Mammary epithelial cell (primary cell): ENCODE measurements at regions of chr14 and their contacts with region 1.

Region 1: GRCh38 chr14:90642244-90642717 is 173.9 kb downstream of the TTC7B start:
- DNase-seq: no peak
- H3K4me3 ChIP-seq: no peak overlapping the region
- H3K27ac ChIP-seq: no peak overlapping the region
- H3K4me1 ChIP-seq: peaks cover 24% of the 10 kb centered on the region
- H3K27me3 ChIP-seq: no peaks in the 10 kb centered on the region
- CTCF ChIP-seq: no peak

Region 2: GRCh38 chr14:90611936-90612335 is 30.3 kb before region 1 on chr14:
- CTCF ChIA-PET with region 1: no interaction called
- dilution Hi-C with region 1: no loop called
- in situ Hi-C with region 1: no loop called
- intact Hi-C with region 1: loop called (anchors 2 kb)
- DNase-seq: no peak
- H3K4me3 ChIP-seq: no peak overlapping the region
- H3K27ac ChIP-seq: no peak overlapping the region
- H3K4me1 ChIP-seq: no peaks in the 10 kb centered on the region
- H3K27me3 ChIP-seq: no peaks in the 10 kb centered on the region
- CTCF ChIP-seq: no peak

Region 3: GRCh38 chr14:90658541-90658967 is 16.3 kb after region 1 on chr14:
- CTCF ChIA-PET with region 1: no interaction called
- dilution Hi-C with region 1: no loop called
- in situ Hi-C with region 1: no loop called
- intact Hi-C with region 1: no loop called
- DNase-seq: peak; percentile 95
- H3K4me3 ChIP-seq: no peak overlapping the region
- H3K27ac ChIP-seq: no peak overlapping the region
- H3K4me1 ChIP-seq: peaks cover 8% of the 10 kb centered on the region
- H3K27me3 ChIP-seq: no peaks in the 10 kb centered on the region
- CTCF ChIP-seq: no peak

Region 4: DNA sequence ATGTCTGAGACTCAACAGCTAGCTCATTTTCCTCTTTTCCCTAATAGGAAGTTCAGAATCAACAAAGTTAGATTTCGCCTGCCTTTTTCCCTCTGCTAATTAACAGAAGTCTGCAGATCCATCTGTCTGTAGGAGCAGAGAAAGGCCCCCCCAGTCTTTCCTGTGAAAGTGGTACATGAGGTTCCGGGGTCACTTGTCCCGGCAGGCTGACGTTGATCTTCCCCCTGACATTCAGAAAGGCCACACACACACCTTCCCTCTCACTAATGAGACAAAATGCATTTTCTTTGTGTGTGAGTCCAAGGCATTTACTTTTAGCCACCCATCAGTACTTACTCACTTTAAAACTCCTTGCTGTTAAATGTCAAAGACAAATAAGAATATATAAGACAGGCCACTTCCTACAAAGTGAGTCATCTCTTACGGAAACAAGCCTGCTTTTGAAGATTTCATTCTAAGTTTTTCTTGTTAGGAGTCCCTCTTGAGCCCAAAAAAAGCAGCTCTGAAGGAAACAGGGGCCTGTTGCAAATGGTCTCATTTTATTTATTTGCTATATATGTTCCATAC is 35.3 kb after region 1 on chr14:
- CTCF ChIA-PET with region 1: no interaction called
- dilution Hi-C with region 1: loop called (anchors 5 kb)
- in situ Hi-C with region 1: no loop called
- intact Hi-C with region 1: no loop called
- DNase-seq: peak; percentile 40
- H3K4me3 ChIP-seq: no peak overlapping the region
- H3K27ac ChIP-seq: no peak overlapping the region
- H3K4me1 ChIP-seq: peaks cover 20% of the 10 kb centered on the region
- H3K27me3 ChIP-seq: no peaks in the 10 kb centered on the region
- CTCF ChIP-seq: no peak

Region 5: DNA sequence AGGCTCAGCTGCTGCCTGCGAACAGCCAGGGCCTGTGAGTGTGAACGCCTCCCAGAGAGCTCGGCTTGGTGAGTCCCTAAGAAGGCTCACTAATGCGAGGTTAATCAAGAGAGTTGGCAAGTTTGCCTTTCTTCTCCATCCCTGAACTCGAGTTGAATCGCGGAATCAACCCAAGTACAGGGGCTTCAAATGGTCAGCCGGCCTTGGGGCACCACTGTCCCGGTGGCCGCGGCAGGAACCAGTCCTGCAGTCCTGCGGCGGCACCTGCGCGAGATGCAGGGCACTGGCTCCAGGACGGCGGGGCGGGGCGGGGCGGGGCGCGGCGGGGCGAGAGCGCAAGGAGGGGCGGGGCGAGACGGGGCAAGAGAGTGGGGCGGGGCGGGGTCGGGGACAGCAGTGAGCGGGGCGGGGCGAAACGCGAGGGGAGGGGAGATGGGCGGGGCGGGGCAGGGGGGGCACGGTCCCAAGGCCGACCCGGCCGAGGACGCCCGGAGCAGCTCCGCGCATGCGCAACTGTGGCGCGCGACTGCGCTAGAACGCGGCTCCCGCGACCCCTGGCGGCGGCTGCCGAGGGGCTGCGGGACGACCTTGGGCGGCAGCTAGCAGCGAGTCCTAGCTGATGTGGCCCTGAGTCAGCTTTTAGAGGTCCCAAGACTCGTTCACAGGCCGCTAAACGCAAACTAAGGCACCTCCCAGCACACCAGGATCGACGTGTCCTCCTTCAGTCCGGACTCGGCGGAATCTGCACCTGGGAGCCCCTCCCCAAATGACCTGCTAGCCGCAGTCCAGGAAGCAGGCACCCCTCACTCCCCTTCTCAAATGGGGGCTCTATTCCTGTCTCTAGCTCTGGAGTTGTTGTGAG is 116.0 kb after region 1 on chr14:
- CTCF ChIA-PET with region 1: no interaction called
- dilution Hi-C with region 1: no loop called
- in situ Hi-C with region 1: no loop called
- intact Hi-C with region 1: no loop called
- DNase-seq: peak; percentile 88
- H3K4me3 ChIP-seq: peak overlapping the region; percentile 44 to 53 (median 45)
- H3K27ac ChIP-seq: peak overlapping the region; percentile 55
- H3K4me1 ChIP-seq: peaks cover 7% of the 10 kb centered on the region
- H3K27me3 ChIP-seq: no peaks in the 10 kb centered on the region
- CTCF ChIP-seq: peak; percentile 57 to 90